Left ventricle myocardium superior (tissue), 1 donor: ENCODE measurements at regions of chr10 and their contacts with region 1.

Region 1: GRCh38 chr10:60937784-60938654 is 6.0 kb downstream of the RHOBTB1 start:
- DNase-seq: no peak
- ATAC-seq: peak; percentile 11

Region 2: GRCh38 chr10:60896033-60896432 is 42.0 kb before region 1 on chr10:
- intact Hi-C with region 1: loop called (anchors 5 kb)
- DNase-seq: no peak
- ATAC-seq: peak; percentile 54